Left cardiac atrium (tissue), 4 donors: ENCODE measurements at regions of chr4 and their contacts with region 1.

Region 1: DNA sequence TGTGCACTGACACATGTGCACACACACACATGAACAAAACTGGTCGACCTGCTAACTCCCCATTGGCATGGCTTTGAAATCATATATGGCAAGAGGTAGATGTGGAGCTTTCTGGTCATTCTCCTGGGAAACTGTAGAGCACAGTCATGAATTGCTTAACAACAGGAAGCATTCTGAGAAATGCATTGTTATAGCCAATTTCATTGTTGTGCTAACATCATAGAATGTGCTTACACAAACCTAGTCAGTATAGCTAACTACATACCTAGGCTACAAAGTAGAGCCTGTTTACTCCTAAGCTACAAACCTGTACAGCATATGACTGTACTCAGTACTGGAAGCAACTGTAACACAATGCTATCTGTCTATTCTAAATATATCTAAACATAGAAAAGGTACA is 134.2 kb upstream of the SH3RF1 start:
- DNase-seq: no peak
- ATAC-seq: no peak

Region 2: DNA sequence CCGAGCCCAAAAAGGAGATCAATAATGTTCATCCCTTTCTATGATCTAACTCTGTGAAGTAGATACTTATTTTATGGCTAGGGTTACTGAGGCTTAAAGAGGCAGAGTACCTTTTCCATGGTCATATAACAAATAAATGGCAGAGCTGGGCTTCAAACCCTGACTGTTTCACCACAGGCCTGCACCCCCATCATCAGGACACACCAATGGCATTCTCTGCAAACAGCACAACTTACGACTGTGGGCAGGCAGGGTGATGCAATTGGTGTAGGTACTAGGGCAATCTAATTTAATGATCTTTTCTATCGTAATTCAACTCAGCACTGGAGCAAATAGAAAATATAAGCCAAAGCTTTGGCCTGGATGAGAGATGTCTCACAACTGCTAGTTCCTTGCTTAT is 276.1 kb before region 1 on chr4:
- intact Hi-C with region 1: no loop called
- DNase-seq: no peak
- ATAC-seq: no peak

Region 3: DNA sequence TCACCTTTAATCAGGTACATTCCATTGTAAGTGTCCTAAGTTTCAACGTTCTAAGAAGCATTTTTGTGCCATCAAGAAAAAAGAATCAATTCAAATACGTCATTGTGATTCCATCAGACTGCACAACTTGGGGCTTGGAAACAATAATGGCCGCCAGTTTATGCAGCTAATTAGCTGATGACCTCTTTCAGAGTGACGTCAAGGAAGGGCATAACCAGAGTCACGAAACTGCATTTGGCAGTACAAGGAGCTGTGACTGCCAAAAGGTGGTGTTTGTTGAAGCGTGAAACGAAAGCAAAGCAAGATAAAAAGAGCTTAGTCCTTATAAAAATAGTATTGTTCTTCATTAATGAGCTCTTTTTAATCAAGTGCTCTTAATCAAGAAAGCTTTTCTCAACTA is 53.1 kb before region 1 on chr4:
- intact Hi-C with region 1: loop called in 1 of 2 experiments (anchors 10 kb)
- DNase-seq: peak; percentile 34
- ATAC-seq: peak; percentile 88 to 94